B cell (primary cell): ENCODE measurements at regions of chr3 and their contacts with region 1.

Region 1: DNA sequence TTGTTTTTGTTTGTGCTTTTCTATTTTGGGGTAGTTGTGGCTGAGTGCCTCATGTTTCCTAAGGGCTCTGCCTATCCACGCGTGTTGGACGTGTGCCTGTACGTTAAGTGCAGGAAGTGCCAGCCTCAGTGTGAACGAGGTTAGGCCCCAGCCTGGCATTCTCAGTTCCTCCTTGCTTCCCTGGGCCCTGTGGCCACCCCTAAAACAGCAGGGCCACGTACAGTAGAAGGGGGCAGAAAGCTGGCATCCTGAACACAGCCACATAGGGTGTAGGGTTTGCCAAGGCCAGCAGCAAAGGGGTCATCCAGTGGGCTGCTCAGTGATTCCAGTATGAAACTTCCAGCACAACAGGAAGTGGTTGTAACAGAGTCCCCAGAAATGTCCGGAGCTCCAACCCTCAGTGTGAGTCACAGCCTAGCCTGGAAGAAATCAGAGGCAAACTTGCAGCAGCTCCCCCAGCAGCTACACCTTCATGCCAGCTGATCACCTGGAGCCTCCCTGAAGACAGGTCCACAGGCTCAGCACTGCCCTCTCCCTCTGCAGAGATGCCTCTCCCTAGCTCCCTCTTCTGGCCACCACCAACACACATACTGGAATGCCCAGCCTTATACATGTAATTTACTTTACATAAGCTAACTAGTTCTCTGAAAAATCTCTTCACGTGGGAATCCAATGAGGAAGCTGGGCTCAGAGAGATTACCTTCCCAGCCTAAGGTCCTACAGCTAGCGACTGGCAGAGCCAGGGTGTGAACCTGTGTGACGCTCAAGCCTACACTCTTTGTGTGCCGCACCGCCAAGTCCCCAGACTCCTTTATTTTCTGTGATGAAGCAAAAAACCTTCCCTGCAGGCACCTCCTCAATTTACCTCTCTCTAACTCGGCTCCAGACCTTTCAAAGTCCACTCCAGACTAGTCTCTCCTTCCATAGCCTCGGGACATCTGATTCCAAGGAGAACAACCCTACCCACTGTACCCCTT is 26.6 kb downstream of the ILDR1 start:
- DNase-seq: peak; percentile 82
- ATAC-seq: peak; percentile 84
- H3K4me3 ChIP-seq: peak overlapping the region in 2 of 5 experiments; percentile 23 to 29
- H3K4me3 Mint-ChIP-seq: peak overlapping the region; percentile 65
- H3K27ac ChIP-seq: peak overlapping the region; percentile 73 to 83
- H3K27ac Mint-ChIP-seq: peak overlapping the region; percentile 92
- H3K4me1 ChIP-seq: peaks cover 83 to 84% of the 10 kb centered on the region in 2 donors
- H3K4me1 Mint-ChIP-seq: peaks cover 84% of the 10 kb centered on the region
- H3K27me3 ChIP-seq: no peaks in the 10 kb centered on the region
- H3K27me3 Mint-ChIP-seq: no peaks in the 10 kb centered on the region
- CTCF ChIP-seq: no peak

Region 2: DNA sequence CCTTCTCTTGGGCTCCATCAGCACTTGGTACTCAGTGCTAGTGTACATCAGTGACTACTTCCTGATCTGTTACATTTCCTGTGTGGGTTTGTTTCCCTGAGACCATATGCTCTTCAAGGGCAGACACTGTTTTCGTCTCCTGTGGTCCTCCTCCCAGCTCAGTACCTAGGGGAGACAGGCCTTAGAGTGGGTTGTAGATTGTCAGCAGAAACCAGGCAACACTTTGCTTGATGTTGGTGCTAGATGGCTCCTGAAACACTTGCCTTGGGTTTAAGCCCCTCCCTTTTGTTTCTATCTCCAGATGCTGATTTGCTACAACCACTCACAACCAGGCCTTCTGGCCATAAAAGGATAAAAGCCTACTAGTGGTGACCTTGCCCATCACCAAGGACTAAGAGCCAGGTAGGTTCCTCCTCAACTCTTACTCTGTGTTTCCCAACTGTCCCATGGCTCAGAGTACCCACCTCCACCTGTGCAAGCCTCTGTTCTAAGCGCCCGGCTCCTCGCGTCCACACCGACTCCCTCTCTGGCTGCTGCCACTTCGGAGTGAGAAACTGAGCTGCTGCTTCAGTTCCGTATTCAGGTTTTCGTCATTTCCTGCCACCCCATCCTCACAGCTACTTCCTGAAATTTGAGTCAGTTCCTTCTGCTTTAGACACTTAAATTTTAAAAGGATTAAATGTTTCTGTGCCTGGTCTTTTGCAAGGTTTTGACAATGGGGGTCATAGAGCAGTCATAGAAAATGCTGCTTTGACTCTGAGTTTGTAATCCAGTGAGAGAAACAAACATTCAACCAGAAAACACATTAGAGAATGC is 334.9 kb before region 1 on chr3 and contains the start of gene HCLS1:
- CTCF ChIA-PET with region 1: interaction called, 6 read pairs
- POLR2A ChIA-PET with region 1: no interaction called
- intact Hi-C with region 1: loop called (anchors 5 kb)
- DNase-seq: peak; percentile 91
- ATAC-seq: peak; percentile 84
- H3K4me3 ChIP-seq: peak within 1 kb of the TSS; percentile 59 to 92 (median 68)
- H3K4me3 Mint-ChIP-seq: peak within 1 kb of the TSS; percentile 97
- H3K27ac ChIP-seq: peak within 1 kb of the TSS; percentile 90 to 94
- H3K27ac Mint-ChIP-seq: peak within 1 kb of the TSS; percentile 98
- H3K4me1 ChIP-seq: peaks cover 34 to 39% of the 10 kb centered on the region in 2 donors
- H3K4me1 Mint-ChIP-seq: peaks cover 54% of the 10 kb centered on the region
- H3K27me3 ChIP-seq: no peaks in the 10 kb centered on the region
- H3K27me3 Mint-ChIP-seq: no peaks in the 10 kb centered on the region
- CTCF ChIP-seq: no peak
- total RNA-seq, gene HCLS1: 317 and 331 TPM in 2 replicates

Region 3: DNA sequence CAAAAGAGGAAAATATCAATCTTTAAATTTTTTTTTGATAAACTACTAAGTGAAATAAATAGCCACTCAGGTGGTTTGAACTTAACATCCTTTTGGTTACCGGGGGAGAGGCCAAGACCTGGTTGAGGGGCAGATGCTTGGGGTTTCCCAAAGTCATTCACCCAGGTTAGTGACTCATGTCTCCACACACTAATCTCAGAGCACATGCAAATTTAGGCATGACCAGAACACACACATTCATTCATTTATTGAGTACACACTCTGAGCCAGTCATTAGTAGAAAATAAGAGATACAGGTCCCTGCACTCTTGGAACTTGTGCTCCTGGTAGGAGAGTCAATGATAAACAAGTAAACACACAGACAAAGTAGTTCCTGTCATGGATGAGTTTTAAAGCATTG is 19.3 kb after region 1 on chr3:
- CTCF ChIA-PET with region 1: interaction called, 12 read pairs
- POLR2A ChIA-PET with region 1: no interaction called
- intact Hi-C with region 1: loop called (anchors 2 kb)
- DNase-seq: peak; percentile 67
- ATAC-seq: peak; percentile 97
- H3K4me3 ChIP-seq: no peak overlapping the region
- H3K4me3 Mint-ChIP-seq: no peak overlapping the region
- H3K27ac ChIP-seq: no peak overlapping the region
- H3K27ac Mint-ChIP-seq: no peak overlapping the region
- H3K4me1 ChIP-seq: peaks cover 8 to 12% of the 10 kb centered on the region in 2 donors
- H3K4me1 Mint-ChIP-seq: peaks cover 38% of the 10 kb centered on the region
- H3K27me3 ChIP-seq: no peaks in the 10 kb centered on the region
- H3K27me3 Mint-ChIP-seq: no peaks in the 10 kb centered on the region
- CTCF ChIP-seq: no peak

Region 4: GRCh38 chr3:122077293-122078234 is 82.1 kb after region 1 on chr3:
- CTCF ChIA-PET with region 1: interaction called, 20 read pairs
- POLR2A ChIA-PET with region 1: interaction called, 3 read pairs
- intact Hi-C with region 1: loop called (anchors 2 kb)
- DNase-seq: peak; percentile 77
- ATAC-seq: peak; percentile 72
- H3K4me3 ChIP-seq: peak overlapping the region; percentile 44 to 95 (median 76)
- H3K4me3 Mint-ChIP-seq: peak overlapping the region; percentile 94
- H3K27ac ChIP-seq: peak overlapping the region; percentile 64 to 81
- H3K27ac Mint-ChIP-seq: peak overlapping the region; percentile 96
- H3K4me1 ChIP-seq: peaks cover 76 to 83% of the 10 kb centered on the region in 2 donors
- H3K4me1 Mint-ChIP-seq: peaks cover 90% of the 10 kb centered on the region
- H3K27me3 ChIP-seq: no peaks in the 10 kb centered on the region
- H3K27me3 Mint-ChIP-seq: no peaks in the 10 kb centered on the region
- CTCF ChIP-seq: peak; percentile 33

Region 5: DNA sequence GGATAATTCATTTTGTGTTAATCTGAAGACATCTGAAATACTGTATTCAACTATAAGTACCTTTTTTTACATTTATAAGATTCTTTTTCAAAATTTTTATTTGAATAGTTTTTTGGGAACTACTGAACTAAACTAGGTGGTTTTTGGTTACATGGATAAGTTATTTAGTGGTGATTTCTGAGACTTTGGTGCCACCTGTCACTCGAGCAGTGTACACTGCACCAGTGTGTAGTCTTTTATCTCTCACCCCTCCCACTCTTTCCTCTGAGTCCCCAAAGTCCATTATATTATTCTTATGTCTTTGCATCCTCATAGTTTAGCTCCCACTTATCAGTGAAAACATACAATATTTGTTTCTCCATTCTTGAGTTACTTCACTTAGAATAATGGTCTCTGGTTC is 117.3 kb after region 1 on chr3:
- CTCF ChIA-PET with region 1: interaction called, 10 read pairs
- POLR2A ChIA-PET with region 1: no interaction called
- intact Hi-C with region 1: no loop called
- DNase-seq: peak; percentile 17
- ATAC-seq: no peak
- H3K4me3 ChIP-seq: no peak overlapping the region
- H3K4me3 Mint-ChIP-seq: no peak overlapping the region
- H3K27ac ChIP-seq: no peak overlapping the region
- H3K27ac Mint-ChIP-seq: no peak overlapping the region
- H3K4me1 ChIP-seq: peaks cover 4% of the 10 kb centered on the region in 2 donors
- H3K4me1 Mint-ChIP-seq: peaks cover 8% of the 10 kb centered on the region
- H3K27me3 ChIP-seq: no peaks in the 10 kb centered on the region
- H3K27me3 Mint-ChIP-seq: no peaks in the 10 kb centered on the region
- CTCF ChIP-seq: no peak